ENCODE measurements at regions of chr5 and their contacts with region 1.

Region 1: DNA sequence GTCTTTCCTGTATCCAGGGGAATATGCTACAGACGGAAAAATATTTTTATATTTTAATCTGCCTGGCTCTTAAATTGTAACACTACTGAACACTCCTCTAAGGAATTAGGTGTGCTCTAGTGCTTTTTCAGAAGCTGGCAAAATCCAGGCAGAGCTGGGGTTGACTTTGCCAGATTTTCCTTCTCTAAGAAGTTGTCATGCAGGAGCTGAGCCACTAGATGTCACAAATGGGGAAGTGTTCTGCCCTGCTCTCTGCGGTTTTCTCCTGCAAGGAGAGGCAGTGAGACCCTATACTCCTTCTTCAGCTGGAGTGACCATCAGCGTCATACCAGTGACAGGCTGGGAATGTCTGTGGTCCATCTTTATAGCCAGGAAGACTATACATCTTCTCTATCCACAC is 112.5 kb downstream of the HAPLN1 start:
- DNase-seq: peak in 1 of 2 experiments; percentile 25
- H3K4me3 ChIP-seq: no peak overlapping the region
- H3K27ac ChIP-seq: no peak overlapping the region
- H3K4me1 ChIP-seq: no peaks in the 10 kb centered on the region
- H3K27me3 ChIP-seq: no peaks in the 10 kb centered on the region
- CTCF ChIP-seq: peak; percentile 66

Region 2: GRCh38 chr5:83632874-83633273 is 24.8 kb after region 1 on chr5:
- CTCF ChIA-PET with region 1: interaction called, 11 read pairs
- POLR2A ChIA-PET with region 1: no interaction called
- intact Hi-C with region 1: no loop called
- DNase-seq: peak; percentile 74 to 85
- H3K4me3 ChIP-seq: no peak overlapping the region
- H3K27ac ChIP-seq: peak overlapping the region; percentile 31; the same call in 1 of the 2 replicates
- H3K4me1 ChIP-seq: peaks cover 12% of the 10 kb centered on the region
- H3K27me3 ChIP-seq: no peaks in the 10 kb centered on the region
- CTCF ChIP-seq: no peak

Region 3: DNA sequence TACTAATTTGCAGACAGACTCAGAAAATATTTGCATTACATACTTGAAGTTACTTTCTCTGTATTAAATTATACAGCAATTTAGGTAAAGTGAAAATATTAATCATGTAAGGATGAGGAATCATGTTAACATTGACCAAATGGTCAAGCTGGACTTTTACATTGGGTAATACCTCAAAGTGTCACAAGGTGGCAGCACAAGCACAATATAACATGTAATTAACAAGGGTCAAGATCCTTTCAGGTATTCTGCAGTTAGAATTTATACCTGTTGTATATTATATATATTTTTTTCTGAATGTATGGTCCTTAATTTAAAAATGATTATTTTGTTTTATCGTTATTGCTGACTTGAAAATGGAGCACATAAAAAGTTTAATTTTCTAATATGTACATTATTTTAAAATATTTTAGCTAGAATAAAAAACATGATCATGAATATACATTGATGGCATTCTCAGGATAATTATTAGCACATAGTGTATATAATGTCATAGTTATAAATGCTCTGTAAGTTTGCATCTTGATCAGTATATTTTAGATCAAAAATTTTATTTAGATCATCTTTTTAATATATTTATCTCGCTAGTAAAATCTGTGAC is 104.0 kb after region 1 on chr5:
- CTCF ChIA-PET with region 1: no interaction called
- POLR2A ChIA-PET with region 1: no interaction called
- intact Hi-C with region 1: loop called (anchors 1 kb)
- DNase-seq: peak; percentile 37 to 47
- H3K4me3 ChIP-seq: no peak overlapping the region
- H3K27ac ChIP-seq: no peak overlapping the region
- H3K4me1 ChIP-seq: no peaks in the 10 kb centered on the region
- H3K27me3 ChIP-seq: no peaks in the 10 kb centered on the region
- CTCF ChIP-seq: peak; percentile 87